Breast epithelium (tissue), 4 donors: ENCODE measurements at regions of chr7 and their contacts with region 1.

Region 1: DNA sequence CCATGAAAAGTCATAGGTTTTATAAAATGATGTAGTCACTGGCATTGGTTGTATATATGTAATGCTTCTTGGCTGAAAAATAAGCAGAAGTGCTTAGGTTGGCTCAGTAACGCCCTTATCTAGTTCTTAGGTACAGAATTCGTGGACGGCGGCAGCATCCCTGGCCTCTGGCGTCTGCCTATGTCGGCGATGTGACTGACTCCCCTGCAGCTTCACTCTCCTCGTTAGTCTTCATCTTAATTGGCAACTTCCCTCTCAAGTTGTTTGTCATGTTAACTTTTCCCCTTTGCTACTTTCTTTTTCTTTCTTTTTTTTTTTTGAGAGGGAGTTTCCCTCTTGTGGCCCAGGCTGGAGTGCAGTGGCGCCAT is 18.5 kb downstream of the CHST12 start:
- DNase-seq: no peak
- H3K4me3 ChIP-seq: no peak overlapping the region
- H3K27ac ChIP-seq: no peak overlapping the region
- H3K4me1 ChIP-seq: peaks cover 0 to 7% of the 10 kb centered on the region in 2 donors
- H3K27me3 ChIP-seq: no peaks in the 10 kb centered on the region
- CTCF ChIP-seq: no peak
- POLR2A ChIP-seq: no peak

Region 2: DNA sequence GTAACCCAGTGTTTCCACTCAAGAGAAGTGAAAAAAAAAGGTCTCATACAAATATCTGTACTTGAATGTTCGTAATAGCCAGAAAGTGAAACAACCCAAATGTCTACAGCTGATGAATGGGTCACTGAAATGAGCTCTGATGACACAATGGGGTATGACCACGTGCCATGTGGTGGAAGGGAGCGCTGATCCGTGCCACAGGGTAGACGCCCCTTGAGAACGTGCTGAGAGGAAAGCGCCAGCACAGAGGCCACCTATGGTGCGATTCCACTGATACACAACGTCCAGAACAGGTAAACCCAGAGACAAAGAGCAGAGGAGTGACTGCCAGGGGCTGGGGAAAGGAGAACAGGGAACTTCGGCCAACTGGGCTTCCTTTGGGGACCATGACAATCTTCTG is 239.5 kb before region 1 on chr7:
- intact Hi-C with region 1: no loop called
- DNase-seq: no peak
- H3K4me3 ChIP-seq: no peak overlapping the region
- H3K27ac ChIP-seq: no peak overlapping the region
- H3K4me1 ChIP-seq: no peaks in the 10 kb centered on the region
- H3K27me3 ChIP-seq: no peaks in the 10 kb centered on the region
- CTCF ChIP-seq: no peak
- POLR2A ChIP-seq: no peak

Region 3: DNA sequence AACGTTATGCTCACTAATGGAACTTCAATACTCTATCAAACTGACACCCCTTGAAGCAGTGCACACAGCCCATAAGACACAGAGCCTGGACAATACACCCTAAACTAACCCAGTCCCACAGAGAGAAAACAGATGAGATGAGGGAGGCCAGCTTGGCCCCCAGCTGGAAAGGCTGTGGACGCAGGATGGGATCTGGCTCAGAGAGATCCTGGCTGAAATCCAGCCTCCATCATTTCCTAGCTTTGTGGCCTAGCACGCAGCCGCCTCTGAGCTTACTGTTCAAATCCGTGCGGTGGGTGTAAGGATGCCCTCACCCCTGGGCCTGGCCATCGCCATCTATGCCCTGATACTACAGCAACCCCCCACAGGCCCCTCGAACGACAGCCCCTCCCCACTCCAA is 140.4 kb before region 1 on chr7:
- intact Hi-C with region 1: no loop called
- DNase-seq: no peak
- H3K4me3 ChIP-seq: no peak overlapping the region
- H3K27ac ChIP-seq: peak overlapping the region in 1 of 2 donors; percentile 79
- H3K4me1 ChIP-seq: no peaks in the 10 kb centered on the region
- H3K27me3 ChIP-seq: no peaks in the 10 kb centered on the region
- CTCF ChIP-seq: no peak
- POLR2A ChIP-seq: no peak

Region 4: GRCh38 chr7:2451171-2452073 is 29.5 kb after region 1 on chr7:
- intact Hi-C with region 1: loop called (anchors 2 kb)
- DNase-seq: peak; percentile 53 to 84
- H3K4me3 ChIP-seq: peak overlapping the region; percentile 23 to 65 (median 41)
- H3K27ac ChIP-seq: peak overlapping the region in 1 of 2 donors; percentile 32
- H3K4me1 ChIP-seq: peaks cover 0 to 12% of the 10 kb centered on the region in 2 donors
- H3K27me3 ChIP-seq: no peaks in the 10 kb centered on the region
- CTCF ChIP-seq: peak in 2 of 3 donors; percentile 81 to 90
- POLR2A ChIP-seq: no peak

Region 5: GRCh38 chr7:2465928-2466327 is 44.0 kb after region 1 on chr7:
- intact Hi-C with region 1: no loop called
- DNase-seq: no peak
- H3K4me3 ChIP-seq: no peak overlapping the region
- H3K27ac ChIP-seq: no peak overlapping the region
- H3K4me1 ChIP-seq: no peaks in the 10 kb centered on the region
- H3K27me3 ChIP-seq: no peaks in the 10 kb centered on the region
- CTCF ChIP-seq: no peak
- POLR2A ChIP-seq: no peak